ENCODE measurements at regions of chr1 and their contacts with region 1.

Region 1: GRCh38 chr1:245045087-245045881 is 109.5 kb upstream of the KIF26B start:
- DNase-seq: no peak
- ATAC-seq: no peak
- H3K4me3 Mint-ChIP-seq: no peak overlapping the region
- H3K27ac Mint-ChIP-seq: no peak overlapping the region
- H3K4me1 Mint-ChIP-seq: peaks cover 9% of the 10 kb centered on the region
- H3K27me3 Mint-ChIP-seq: peaks cover 2% of the 10 kb centered on the region

Region 2: DNA sequence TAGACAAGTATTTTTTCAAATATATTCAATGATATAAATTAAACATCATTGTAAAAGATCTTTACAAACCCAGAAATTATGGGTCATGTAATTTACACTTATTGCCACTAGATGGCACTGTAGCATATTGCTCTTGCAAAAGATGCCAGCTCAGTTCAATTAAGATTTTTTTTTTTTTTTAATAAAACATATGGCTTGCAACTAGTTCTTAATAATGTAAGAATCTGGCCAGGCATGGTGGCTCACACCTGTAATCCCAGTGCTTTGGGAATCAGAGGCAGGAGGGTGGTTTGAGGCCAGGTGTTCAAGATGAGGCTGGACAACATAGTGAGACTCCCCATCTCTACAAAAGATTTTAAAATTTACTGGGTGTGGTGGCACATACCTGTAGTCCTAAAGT is 441.8 kb before region 1 on chr1:
- CTCF ChIA-PET with region 1: interaction called, 25 read pairs
- POLR2A ChIA-PET with region 1: no interaction called
- DNase-seq: no peak
- ATAC-seq: no peak
- H3K4me3 Mint-ChIP-seq: no peak overlapping the region
- H3K27ac Mint-ChIP-seq: no peak overlapping the region
- H3K4me1 Mint-ChIP-seq: no peaks in the 10 kb centered on the region
- H3K27me3 Mint-ChIP-seq: no peaks in the 10 kb centered on the region

Region 3: DNA sequence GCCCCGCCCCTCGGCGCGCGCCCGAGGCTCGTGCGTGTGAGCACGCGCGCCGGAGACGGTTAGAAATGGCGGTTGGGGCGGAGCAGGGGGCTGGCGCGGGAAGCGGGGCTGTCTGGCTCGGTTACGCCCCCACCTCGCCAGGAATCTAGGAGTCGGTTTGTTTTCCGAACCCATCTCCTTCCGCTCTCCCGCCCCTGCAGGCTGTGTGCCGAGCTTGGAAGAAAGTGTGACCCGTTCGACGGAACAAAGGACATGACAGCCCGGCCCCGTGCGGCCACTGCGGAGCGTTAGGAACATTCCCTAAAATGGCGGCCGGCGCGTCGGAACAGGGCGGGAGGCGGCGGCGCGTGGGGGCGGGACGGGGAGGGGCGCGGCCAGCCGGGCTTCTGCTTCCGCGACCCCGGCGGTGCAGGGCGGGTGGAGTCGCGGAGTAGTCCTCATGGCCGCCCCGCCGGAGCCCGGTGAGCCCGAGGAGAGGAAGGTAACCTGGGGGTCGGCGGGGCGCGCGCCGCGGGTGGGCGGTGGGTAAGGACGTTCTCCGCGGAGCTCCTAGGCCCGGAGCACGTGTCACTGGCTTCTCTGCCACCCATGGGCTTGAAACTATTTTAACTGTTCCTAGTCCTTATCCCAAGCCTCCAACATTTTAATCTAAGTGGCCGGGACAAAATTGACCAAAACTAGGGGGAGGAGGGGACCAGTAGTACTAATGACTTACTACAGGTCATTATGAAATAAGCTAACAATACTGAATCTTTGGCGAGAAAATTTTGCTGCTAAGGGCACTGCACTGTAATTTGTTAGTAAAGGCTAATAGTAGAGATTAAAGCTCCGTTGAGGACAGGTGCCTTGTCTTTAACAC is 209.8 kb before region 1 on chr1 and contains the start of gene COX20:
- CTCF ChIA-PET with region 1: interaction called, 15 read pairs
- POLR2A ChIA-PET with region 1: interaction called, 9 read pairs
- DNase-seq: peak; percentile 90
- ATAC-seq: peak; percentile 70
- H3K4me3 Mint-ChIP-seq: peak within 1 kb of the TSS; percentile 93
- H3K27ac Mint-ChIP-seq: peak within 1 kb of the TSS; percentile 99
- H3K4me1 Mint-ChIP-seq: peaks cover 50% of the 10 kb centered on the region
- H3K27me3 Mint-ChIP-seq: no peaks in the 10 kb centered on the region
- total RNA-seq, gene COX20: 31.3 to 33.6 TPM

Region 4: GRCh38 chr1:244864253-244865027 is 180.8 kb before region 1 on chr1 and contains the start of gene HNRNPU:
- CTCF ChIA-PET with region 1: interaction called, 41 read pairs
- POLR2A ChIA-PET with region 1: no interaction called
- DNase-seq: peak; percentile 96
- ATAC-seq: peak; percentile 70
- H3K4me3 Mint-ChIP-seq: peak within 1 kb of the TSS; percentile 93
- H3K27ac Mint-ChIP-seq: peak within 1 kb of the TSS; percentile 96
- H3K4me1 Mint-ChIP-seq: peaks cover 36% of the 10 kb centered on the region
- H3K27me3 Mint-ChIP-seq: no peaks in the 10 kb centered on the region
- total RNA-seq, gene HNRNPU: 432 to 435 TPM

Region 5: DNA sequence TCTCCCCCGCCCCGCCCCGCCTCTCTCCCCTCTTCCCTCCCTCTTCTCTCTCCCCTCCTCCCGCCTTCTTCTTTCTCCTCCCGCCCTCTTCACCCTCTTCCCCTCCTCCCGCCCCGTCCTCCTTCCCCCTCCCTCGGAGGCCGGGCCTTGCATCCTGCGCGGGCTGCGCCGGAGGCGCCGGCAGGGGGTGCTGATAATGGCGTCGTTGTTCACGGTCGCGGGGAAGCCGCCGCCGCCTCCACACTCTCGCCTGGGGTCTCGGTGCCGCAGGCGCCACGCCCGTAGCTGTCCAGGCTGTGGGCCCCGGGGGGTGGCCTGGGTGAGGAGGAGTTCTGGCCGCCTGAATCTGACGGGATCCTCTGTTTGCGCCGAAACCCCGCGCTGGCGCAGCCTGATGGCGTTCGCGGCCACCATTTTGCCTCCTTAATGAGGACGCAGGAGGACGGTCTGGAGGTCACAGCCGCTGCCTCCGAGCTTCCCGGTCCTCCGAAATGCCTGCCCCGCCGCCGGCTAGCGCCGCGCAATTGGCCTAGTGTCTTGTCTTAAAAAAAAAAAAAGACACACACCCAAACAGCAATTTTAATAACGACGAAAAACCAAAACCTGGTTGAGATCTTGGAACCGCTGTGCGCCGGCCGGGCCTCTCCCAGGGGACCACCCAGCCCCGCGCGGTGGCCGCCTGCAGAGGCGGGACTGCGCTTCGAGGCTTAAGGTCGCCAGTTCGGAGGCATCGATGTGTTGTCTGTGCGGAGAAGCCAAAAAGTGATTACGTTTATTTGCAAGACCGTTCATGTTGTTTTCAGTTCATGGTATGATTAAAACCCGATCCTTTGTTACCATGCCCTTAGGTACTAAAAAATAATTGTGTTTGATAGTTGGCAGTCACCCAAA is 74.4 kb before region 1 on chr1:
- CTCF ChIA-PET with region 1: interaction called, 13 read pairs
- POLR2A ChIA-PET with region 1: no interaction called
- DNase-seq: peak; percentile 94
- ATAC-seq: peak; percentile 83
- H3K4me3 Mint-ChIP-seq: peak overlapping the region; percentile 88
- H3K27ac Mint-ChIP-seq: peak overlapping the region; percentile 99
- H3K4me1 Mint-ChIP-seq: peaks cover 18% of the 10 kb centered on the region
- H3K27me3 Mint-ChIP-seq: no peaks in the 10 kb centered on the region

Region 6: DNA sequence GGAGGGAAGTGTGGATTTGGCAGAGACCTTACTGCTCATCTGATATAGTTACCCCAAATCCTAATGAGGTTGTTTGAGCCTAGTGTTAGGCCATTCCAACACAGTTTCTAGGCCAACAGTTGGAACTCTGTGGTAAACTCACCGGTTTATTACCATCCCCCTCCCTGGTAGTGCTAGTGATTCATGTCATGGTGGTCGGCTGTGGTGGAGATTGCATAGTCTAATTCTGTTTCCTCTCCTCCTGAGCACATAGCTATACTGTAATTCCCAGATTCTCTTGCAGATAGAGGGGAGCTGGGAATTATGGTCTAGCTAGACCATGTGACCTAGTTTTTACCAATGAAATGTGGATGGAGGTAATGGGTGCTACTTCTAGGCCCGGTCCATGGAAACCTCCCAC is 14.2 kb before region 1 on chr1:
- CTCF ChIA-PET with region 1: interaction called, 23 read pairs
- POLR2A ChIA-PET with region 1: no interaction called
- DNase-seq: no peak
- ATAC-seq: no peak
- H3K4me3 Mint-ChIP-seq: no peak overlapping the region
- H3K27ac Mint-ChIP-seq: no peak overlapping the region
- H3K4me1 Mint-ChIP-seq: peaks cover 16% of the 10 kb centered on the region
- H3K27me3 Mint-ChIP-seq: no peaks in the 10 kb centered on the region